Heart left ventricle (tissue), 16 donors: ENCODE measurements at regions of chr15 and their contacts with region 1.

Region 1: DNA sequence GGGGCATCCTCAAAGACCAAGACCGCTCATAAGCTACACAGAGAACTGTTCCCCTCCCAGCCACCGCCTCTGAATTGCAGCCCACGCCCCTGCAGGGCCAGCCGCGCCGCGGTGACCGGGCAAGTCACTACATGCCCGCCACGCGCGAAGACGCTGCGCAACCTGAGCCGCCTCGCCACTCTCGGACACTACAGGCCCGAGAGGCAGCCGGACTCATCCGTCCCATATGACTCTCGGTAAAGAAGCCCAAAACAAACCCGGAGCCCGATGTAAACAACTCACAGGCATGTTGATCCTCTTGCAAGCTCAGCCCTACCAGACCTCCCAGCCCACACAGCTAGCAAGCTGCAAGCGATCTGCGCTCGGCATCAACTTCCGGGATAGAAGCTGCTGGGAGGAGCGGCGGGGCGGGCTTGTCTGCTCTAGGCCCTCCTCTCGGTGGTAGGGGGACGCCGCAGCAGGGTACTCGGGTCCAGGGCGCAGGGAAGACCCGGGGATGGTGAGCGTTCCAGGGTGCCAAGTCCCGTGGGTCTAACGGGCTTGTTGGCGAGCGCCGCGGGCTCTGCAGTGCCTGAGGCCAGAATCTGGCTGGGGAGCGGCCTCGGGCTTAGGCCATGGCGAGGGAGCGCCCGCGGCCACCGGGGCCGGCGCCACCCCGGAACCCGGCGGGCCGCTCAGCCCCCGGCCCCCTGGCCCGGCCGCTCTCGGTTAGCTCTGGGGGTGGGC is at the start of gene RPS27L:
- DNase-seq: peak; percentile 92 to 95 (median 94)
- ATAC-seq: peak; percentile 89 to 98 (median 98)
- H3K4me3 ChIP-seq: peak within 1 kb of the TSS; percentile 65 to 97 (median 84)
- H3K27ac ChIP-seq: peak within 1 kb of the TSS; percentile 91 to 99 (median 96)
- H3K4me1 ChIP-seq: peaks cover 0 to 31% (median 21%) of the 10 kb centered on the region in 12 donors
- H3K27me3 ChIP-seq: no peaks in the 10 kb centered on the region
- CTCF ChIP-seq: peak in 2 of 12 donors; percentile 8 to 19
- POLR2A ChIP-seq: peak in 1 of 2 donors; percentile 74
- total RNA-seq, gene RPS27L: 61.3 to 221 (median 137) TPM

Region 2: DNA sequence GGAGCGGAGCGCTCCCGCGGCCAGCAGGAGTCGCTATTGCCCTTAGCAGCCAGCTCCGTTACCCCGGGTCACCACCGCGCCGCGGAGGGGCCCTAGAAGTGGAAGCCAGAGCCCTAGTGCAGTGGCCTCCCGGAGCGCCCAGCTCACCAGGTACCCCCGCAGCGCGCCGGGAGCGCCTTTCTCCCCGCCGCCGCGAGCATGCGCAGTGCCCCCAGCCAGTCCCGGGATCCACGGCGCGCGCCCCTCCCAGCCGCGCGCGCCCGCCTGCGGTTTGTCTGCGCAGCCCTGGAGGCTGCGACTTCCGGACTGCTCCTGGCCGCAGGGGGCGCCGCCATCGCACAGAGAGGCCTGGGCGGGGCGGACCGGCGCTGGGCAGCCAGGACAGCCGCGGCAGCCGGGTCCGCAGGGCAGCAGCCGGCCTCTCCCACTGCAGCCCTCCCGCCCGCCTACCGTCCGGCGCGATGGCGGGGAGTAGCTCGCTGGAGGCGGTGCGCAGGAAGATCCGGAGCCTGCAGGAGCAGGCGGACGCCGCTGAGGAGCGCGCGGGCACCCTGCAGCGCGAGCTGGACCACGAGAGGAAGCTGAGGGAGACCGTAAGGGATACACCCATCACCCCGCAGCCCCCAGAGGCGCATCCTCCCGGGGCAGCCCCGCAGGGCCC is 109.0 kb before region 1 on chr15:
- intact Hi-C with region 1: no loop called
- DNase-seq: peak; percentile 90 to 95 (median 91)
- ATAC-seq: peak; percentile 28 to 83 (median 62)
- H3K4me3 ChIP-seq: peak overlapping the region; percentile 62 to 95 (median 84)
- H3K27ac ChIP-seq: peak overlapping the region; percentile 91 to 99 (median 96)
- H3K4me1 ChIP-seq: peaks cover 0 to 85% (median 49%) of the 10 kb centered on the region in 12 donors
- H3K27me3 ChIP-seq: peaks cover 0 to 40% (median 0%) of the 10 kb centered on the region in 9 donors
- CTCF ChIP-seq: peak; percentile 79 to 98 (median 91)
- POLR2A ChIP-seq: peak; percentile 24 to 96

Region 3: GRCh38 chr15:63107895-63108546 is 49.3 kb before region 1 on chr15:
- intact Hi-C with region 1: no loop called
- DNase-seq: peak in 1 of 5 donors; percentile 34
- ATAC-seq: peak; percentile 30 to 69 (median 47)
- H3K4me3 ChIP-seq: no peak overlapping the region
- H3K27ac ChIP-seq: peak overlapping the region in 1 of 12 donors; percentile 19
- H3K4me1 ChIP-seq: peaks cover 0 to 7% (median 0%) of the 10 kb centered on the region in 12 donors
- H3K27me3 ChIP-seq: no peaks in the 10 kb centered on the region
- CTCF ChIP-seq: no peak
- POLR2A ChIP-seq: no peak

Region 4: DNA sequence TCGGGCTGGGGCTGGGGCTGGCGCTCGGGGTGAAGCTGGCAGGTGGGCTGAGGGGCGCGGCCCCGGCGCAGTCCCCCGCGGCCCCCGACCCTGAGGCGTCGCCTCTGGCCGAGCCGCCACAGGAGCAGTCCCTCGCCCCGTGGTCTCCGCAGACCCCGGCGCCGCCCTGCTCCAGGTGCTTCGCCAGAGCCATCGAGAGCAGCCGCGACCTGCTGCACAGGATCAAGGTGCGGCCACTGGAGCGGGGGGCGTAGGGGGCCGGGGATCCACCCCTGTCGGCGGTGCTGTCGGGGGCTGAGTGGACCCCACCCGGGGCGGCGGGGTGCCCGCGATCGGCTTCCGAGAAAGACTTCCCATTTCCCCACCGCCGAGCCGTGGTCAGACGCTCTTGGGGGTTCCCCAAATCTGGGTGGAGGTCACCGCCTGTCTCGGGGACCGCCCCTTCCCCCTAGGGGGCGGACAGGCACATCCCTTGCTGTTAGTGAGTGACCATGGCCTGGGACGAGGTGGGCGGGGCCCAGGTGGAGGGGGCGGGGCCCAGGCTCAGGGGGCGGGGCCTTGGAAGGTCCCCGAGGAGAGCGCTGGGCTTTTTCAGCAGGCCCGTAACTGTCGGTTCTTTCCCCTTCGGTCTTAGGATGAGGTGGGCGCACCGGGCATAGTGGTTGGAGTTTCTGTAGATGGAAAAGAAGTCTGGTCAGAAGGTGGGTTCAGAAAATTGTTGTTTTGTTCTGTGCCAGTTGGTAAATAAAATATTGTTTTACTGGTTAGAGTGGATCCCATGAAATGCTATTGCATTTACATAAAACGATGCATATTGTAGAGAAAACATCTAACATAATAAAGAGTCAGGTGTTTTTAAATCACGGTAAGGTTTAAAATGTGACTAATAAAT is 35.0 kb before region 1 on chr15:
- intact Hi-C with region 1: loop called in 1 of 10 experiments (anchors 2 kb)
- DNase-seq: peak; percentile 82 to 92 (median 85)
- ATAC-seq: peak; percentile 96 to 98 (median 97)
- H3K4me3 ChIP-seq: peak overlapping the region; percentile 72 to 99 (median 95)
- H3K27ac ChIP-seq: peak overlapping the region; percentile 88 to 97 (median 94)
- H3K4me1 ChIP-seq: peaks cover 0 to 15% (median 7%) of the 10 kb centered on the region in 12 donors
- H3K27me3 ChIP-seq: no peaks in the 10 kb centered on the region
- CTCF ChIP-seq: peak in 10 of 12 donors; percentile 6 to 49 (median 23)
- POLR2A ChIP-seq: no peak

Region 5: DNA sequence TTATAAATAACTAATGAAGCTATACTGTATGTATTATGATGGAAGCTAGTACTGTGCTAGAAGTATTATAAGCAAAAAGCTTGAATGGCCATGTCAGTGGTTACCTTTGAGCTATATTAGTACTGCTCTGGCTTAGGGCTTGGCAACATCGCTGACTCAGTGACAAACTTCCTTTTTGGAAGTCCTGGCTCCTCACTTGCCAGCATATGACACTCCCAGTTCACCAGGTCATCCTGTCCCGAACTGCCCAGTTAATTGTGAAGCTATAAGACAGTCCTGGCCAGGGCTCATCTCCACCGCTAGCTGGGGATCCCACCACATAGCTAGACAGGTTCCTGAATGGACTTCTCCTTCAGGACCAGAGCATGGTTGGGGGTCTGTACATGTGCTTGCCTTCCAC is 64.1 kb after region 1 on chr15:
- intact Hi-C with region 1: no loop called
- DNase-seq: peak in 4 of 5 donors; percentile 43 to 60 (median 49)
- ATAC-seq: peak; percentile 70 to 90 (median 76)
- H3K4me3 ChIP-seq: no peak overlapping the region
- H3K27ac ChIP-seq: peak overlapping the region in 4 of 12 donors; percentile 11 to 77 (median 34)
- H3K4me1 ChIP-seq: peaks cover 4 to 76% (median 28%) of the 10 kb centered on the region in 12 donors
- H3K27me3 ChIP-seq: no peaks in the 10 kb centered on the region
- CTCF ChIP-seq: no peak
- POLR2A ChIP-seq: no peak

Region 6: GRCh38 chr15:63277038-63277892 is 120.0 kb after region 1 on chr15 and contains the start of gene APH1B:
- intact Hi-C with region 1: loop called in 6 of 10 experiments (anchors 2 to 10 kb)
- DNase-seq: peak; percentile 87 to 92 (median 89)
- ATAC-seq: peak; percentile 78 to 97 (median 92)
- H3K4me3 ChIP-seq: peak within 1 kb of the TSS; percentile 61 to 94 (median 88)
- H3K27ac ChIP-seq: peak within 1 kb of the TSS; percentile 25 to 89 (median 83)
- H3K4me1 ChIP-seq: peaks cover 0 to 23% (median 6%) of the 10 kb centered on the region in 12 donors
- H3K27me3 ChIP-seq: no peaks in the 10 kb centered on the region
- CTCF ChIP-seq: no peak
- POLR2A ChIP-seq: peak in 1 of 2 donors; percentile 53
- total RNA-seq, gene APH1B: 4.3 to 17.6 (median 6.3) TPM

Region 7: DNA sequence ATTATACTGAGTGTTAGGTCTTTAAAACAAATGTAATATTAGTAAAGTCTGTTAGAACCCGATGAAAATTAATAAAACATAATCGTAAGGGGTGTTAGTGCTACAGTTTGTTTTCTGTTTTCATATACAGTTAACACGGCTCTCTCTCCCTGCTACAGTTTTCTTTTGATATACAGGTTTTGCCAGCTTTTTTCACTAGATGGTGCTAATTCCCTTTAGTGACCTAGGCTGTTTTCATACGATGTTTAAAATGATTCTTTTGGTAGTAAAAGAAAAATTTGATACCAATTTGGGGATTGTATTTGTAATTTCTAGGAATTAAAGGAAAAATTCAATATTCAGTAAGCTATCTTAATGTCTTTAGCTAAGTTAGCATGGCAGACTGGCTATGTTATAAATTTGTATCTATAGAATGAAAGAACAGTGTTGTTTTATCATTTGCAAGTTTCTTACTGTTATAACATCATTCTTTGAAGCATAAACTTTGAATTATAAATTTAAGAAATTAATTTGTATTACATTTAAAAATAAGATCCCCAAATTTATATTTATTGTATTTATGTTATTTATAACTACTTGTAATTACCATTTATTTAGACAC is 131.6 kb after region 1 on chr15:
- intact Hi-C with region 1: loop called in 1 of 10 experiments (anchors 10 kb)
- DNase-seq: no peak
- ATAC-seq: peak in 3 of 4 donors; percentile 53 to 62 (median 61)
- H3K4me3 ChIP-seq: no peak overlapping the region
- H3K27ac ChIP-seq: no peak overlapping the region
- H3K4me1 ChIP-seq: peaks cover 0 to 25% (median 3%) of the 10 kb centered on the region in 12 donors
- H3K27me3 ChIP-seq: no peaks in the 10 kb centered on the region
- CTCF ChIP-seq: peak; percentile 47 to 81 (median 72)
- POLR2A ChIP-seq: no peak

Region 8: DNA sequence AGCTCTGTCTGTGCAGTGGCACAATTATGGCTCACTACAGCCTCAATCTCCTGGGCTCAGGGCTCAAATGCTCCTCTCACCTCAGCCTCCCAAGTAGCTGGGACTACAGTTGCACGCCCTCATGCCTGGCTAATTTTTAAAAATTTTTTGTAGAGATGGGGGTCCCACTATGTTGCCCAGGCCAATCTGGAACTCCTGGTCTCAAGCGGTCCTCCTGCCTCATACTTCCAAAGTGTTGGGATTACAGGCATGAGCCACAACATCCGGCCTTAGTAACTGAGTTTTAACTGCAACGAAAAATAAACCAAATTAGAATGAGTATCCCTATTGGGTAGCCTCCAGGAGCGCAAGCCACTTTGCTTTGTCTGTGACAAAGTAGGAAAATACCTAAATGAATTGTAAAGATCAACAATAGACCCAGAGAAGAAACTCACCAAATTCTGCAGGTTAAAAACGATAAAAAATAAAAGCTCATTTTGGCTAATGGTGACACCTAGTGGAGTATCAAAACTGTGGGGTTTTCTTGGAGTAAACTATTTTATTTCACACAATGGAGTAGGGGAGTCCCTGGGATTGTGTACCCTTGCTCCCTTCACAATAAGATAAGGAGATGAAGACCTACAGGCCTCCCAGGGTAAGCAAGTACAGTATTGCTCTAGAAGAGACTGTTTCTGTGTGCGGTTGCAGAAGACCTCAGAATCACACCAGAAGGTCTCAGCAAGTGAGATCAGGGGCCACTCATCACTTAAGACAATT is 245.4 kb after region 1 on chr15:
- intact Hi-C with region 1: loop called in 1 of 10 experiments (anchors 10 kb)
- DNase-seq: no peak
- ATAC-seq: peak; percentile 26 to 47 (median 33)
- H3K4me3 ChIP-seq: no peak overlapping the region
- H3K27ac ChIP-seq: no peak overlapping the region
- H3K4me1 ChIP-seq: peaks cover 0 to 13% (median 0%) of the 10 kb centered on the region in 12 donors
- H3K27me3 ChIP-seq: no peaks in the 10 kb centered on the region
- CTCF ChIP-seq: peak; percentile 51 to 78 (median 68)
- POLR2A ChIP-seq: no peak